Left lung (tissue), 14 donors: ENCODE measurements at regions of chr3 and their contacts with region 1.

Region 1: GRCh38 chr3:113287803-113288648 is 76.7 kb downstream of the BOC start:
- DNase-seq: peak in 2 of 4 donors; percentile 65 to 74
- ATAC-seq: peak; percentile 85
- H3K4me3 ChIP-seq: no peak overlapping the region
- H3K27ac ChIP-seq: no peak overlapping the region
- H3K4me1 ChIP-seq: peaks cover 0 to 7% of the 10 kb centered on the region in 2 donors
- H3K27me3 ChIP-seq: no peaks in the 10 kb centered on the region
- CTCF ChIP-seq: peak; percentile 83 to 97

Region 2: DNA sequence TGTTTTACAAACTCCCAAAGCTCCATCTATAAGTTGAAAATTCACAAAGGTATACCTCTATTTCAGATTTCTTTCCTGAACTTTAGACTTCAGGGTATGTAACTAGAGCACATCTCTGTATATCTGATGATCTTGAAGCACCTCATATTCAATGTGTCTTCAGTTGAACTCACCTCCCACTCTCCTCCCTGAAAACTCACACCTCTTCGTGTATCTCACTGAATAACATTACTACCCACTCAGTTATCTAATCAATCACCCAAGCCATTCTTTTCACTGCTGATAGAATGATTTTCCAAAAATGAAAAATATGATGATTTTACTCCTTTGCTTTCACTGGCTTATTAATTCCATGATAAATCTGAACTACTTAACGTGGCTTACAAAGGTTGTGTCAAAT is 244.3 kb before region 1 on chr3:
- intact Hi-C with region 1: loop called (anchors 5 to 10 kb)
- DNase-seq: no peak
- ATAC-seq: no peak
- H3K4me3 ChIP-seq: no peak overlapping the region
- H3K27ac ChIP-seq: no peak overlapping the region
- H3K4me1 ChIP-seq: no peaks in the 10 kb centered on the region
- H3K27me3 ChIP-seq: no peaks in the 10 kb centered on the region
- CTCF ChIP-seq: no peak

Region 3: DNA sequence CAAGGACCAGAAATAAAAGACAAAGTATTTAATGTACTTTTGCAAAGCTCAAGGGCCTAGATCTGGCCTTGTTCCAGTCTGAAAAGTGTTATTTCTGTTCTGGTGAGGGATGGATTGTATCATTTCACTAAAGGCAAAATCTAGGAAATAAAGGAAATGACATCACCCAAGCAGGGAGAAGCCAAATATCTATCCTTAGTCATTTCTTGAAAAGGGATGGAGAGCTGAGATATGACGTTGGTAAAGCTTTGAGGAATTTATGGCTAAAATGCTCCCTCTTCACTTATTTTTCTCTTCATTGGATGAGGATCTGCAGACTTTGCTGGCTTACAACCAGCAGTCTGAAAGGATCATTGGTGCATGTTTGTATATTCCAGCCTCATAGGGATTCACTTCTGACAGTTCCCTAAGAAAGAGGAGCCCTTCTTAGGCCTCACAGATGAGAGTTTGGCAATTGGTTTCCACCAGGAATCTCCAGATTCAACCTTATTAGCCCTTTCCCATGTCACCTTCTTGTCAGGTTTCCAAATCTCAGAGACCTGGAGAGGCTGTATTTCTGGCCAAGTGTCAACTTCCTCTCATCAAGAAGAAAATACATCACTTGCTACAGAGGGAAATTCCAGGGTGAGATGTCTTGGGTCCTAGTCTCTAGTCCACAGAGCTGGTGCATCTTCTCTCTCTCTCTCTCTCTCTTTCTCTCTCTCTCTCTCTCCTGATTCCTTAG is 170.4 kb before region 1 on chr3:
- intact Hi-C with region 1: no loop called
- DNase-seq: peak in 1 of 4 donors; percentile 45
- ATAC-seq: peak; percentile 35
- H3K4me3 ChIP-seq: no peak overlapping the region
- H3K27ac ChIP-seq: no peak overlapping the region
- H3K4me1 ChIP-seq: no peaks in the 10 kb centered on the region
- H3K27me3 ChIP-seq: no peaks in the 10 kb centered on the region
- CTCF ChIP-seq: no peak

Region 4: GRCh38 chr3:113136071-113136470 is 152.0 kb before region 1 on chr3:
- intact Hi-C with region 1: loop called in 1 of 2 experiments (anchors 5 kb)
- DNase-seq: peak in 1 of 4 donors; percentile 32
- ATAC-seq: peak; percentile 47
- H3K4me3 ChIP-seq: no peak overlapping the region
- H3K27ac ChIP-seq: no peak overlapping the region
- H3K4me1 ChIP-seq: no peaks in the 10 kb centered on the region
- H3K27me3 ChIP-seq: no peaks in the 10 kb centered on the region
- CTCF ChIP-seq: peak in 1 of 2 donors; percentile 12

Region 5: GRCh38 chr3:113795693-113796092 is 507.7 kb after region 1 on chr3:
- intact Hi-C with region 1: no loop called
- DNase-seq: no peak
- ATAC-seq: no peak
- H3K4me3 ChIP-seq: no peak overlapping the region
- H3K27ac ChIP-seq: no peak overlapping the region
- H3K4me1 ChIP-seq: no peaks in the 10 kb centered on the region
- H3K27me3 ChIP-seq: no peaks in the 10 kb centered on the region
- CTCF ChIP-seq: no peak

Region 6: GRCh38 chr3:113812854-113813253 is 524.8 kb after region 1 on chr3:
- intact Hi-C with region 1: no loop called
- DNase-seq: no peak
- ATAC-seq: no peak
- H3K4me3 ChIP-seq: no peak overlapping the region
- H3K27ac ChIP-seq: no peak overlapping the region
- H3K4me1 ChIP-seq: no peaks in the 10 kb centered on the region
- H3K27me3 ChIP-seq: no peaks in the 10 kb centered on the region
- CTCF ChIP-seq: no peak